Natural killer cell (primary cell): ENCODE measurements at regions of chr4 and their contacts with region 1.

Region 1: GRCh38 chr4:48085821-48086607 is 48.0 kb downstream of the TXK start:
- DNase-seq: no peak
- ATAC-seq: peak; percentile 35 to 78 (median 73)
- H3K4me3 ChIP-seq: no peak overlapping the region
- H3K4me3 Mint-ChIP-seq: no peak overlapping the region
- H3K27ac ChIP-seq: no peak overlapping the region
- H3K27ac Mint-ChIP-seq: peak overlapping the region; percentile 52 to 73
- H3K4me1 ChIP-seq: peaks cover 13% of the 10 kb centered on the region
- H3K4me1 Mint-ChIP-seq: peaks cover 42 to 48% of the 10 kb centered on the region in 2 donors
- H3K27me3 ChIP-seq: no peaks in the 10 kb centered on the region
- H3K27me3 Mint-ChIP-seq: no peaks in the 10 kb centered on the region
- CTCF ChIP-seq: no peak

Region 2: GRCh38 chr4:47926639-47927258 is 159.3 kb before region 1 on chr4:
- intact Hi-C with region 1: loop called (anchors 5 kb)
- DNase-seq: peak; percentile 28 to 71
- ATAC-seq: peak; percentile 88 to 99 (median 98)
- H3K4me3 ChIP-seq: no peak overlapping the region
- H3K4me3 Mint-ChIP-seq: no peak overlapping the region
- H3K27ac ChIP-seq: no peak overlapping the region
- H3K27ac Mint-ChIP-seq: no peak overlapping the region
- H3K4me1 ChIP-seq: peaks cover 6% of the 10 kb centered on the region
- H3K4me1 Mint-ChIP-seq: peaks cover 6% of the 10 kb centered on the region in 2 donors
- H3K27me3 ChIP-seq: peaks cover 2% of the 10 kb centered on the region
- H3K27me3 Mint-ChIP-seq: peaks cover 32 to 53% of the 10 kb centered on the region in 2 donors
- CTCF ChIP-seq: peak; percentile 79

Region 3: GRCh38 chr4:48008021-48008596 is 77.9 kb before region 1 on chr4:
- intact Hi-C with region 1: loop called (anchors 1 kb)
- DNase-seq: no peak
- ATAC-seq: no peak
- H3K4me3 ChIP-seq: no peak overlapping the region
- H3K4me3 Mint-ChIP-seq: no peak overlapping the region
- H3K27ac ChIP-seq: no peak overlapping the region
- H3K27ac Mint-ChIP-seq: no peak overlapping the region
- H3K4me1 ChIP-seq: no peaks in the 10 kb centered on the region
- H3K4me1 Mint-ChIP-seq: no peaks in the 10 kb centered on the region
- H3K27me3 ChIP-seq: no peaks in the 10 kb centered on the region
- H3K27me3 Mint-ChIP-seq: peaks cover 6 to 10% of the 10 kb centered on the region in 2 donors
- CTCF ChIP-seq: no peak

Region 4: DNA sequence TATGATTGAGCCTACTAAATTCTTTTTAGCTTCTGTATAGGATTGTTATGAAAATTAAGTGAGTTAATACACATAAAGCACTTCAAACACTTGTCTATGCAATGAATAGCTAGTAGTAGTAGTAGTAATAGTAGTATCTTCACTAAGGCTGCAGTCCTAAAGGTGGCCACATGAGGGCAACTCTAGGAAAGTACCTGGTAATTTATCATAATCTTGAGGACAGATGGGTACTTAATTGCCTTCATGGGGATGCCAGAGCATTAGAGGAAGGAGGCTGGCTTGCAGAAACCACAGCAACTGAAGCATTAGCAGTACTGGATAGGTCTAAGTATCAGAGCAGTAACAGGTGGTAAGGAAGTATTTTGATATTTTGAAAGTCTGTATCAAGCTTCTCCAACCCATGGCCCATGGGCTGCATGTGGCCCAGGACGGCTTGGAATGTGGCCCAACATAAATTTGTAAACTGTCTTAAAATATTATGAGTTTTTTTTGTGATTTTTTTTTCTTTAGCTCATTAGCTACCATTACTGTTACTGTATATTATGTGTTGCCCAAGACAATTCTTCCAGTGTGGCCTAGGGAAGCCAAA is 52.1 kb before region 1 on chr4:
- intact Hi-C with region 1: loop called (anchors 1 kb)
- DNase-seq: peak; percentile 55 to 78
- ATAC-seq: peak; percentile 84 to 99 (median 98)
- H3K4me3 ChIP-seq: no peak overlapping the region
- H3K4me3 Mint-ChIP-seq: no peak overlapping the region
- H3K27ac ChIP-seq: no peak overlapping the region
- H3K27ac Mint-ChIP-seq: peak overlapping the region in 1 of 2 donors; percentile 19
- H3K4me1 ChIP-seq: peaks cover 8% of the 10 kb centered on the region
- H3K4me1 Mint-ChIP-seq: peaks cover 6 to 7% of the 10 kb centered on the region in 2 donors
- H3K27me3 ChIP-seq: no peaks in the 10 kb centered on the region
- H3K27me3 Mint-ChIP-seq: peaks cover 0 to 17% of the 10 kb centered on the region in 2 donors
- CTCF ChIP-seq: peak; percentile 83

Region 5: GRCh38 chr4:48100256-48100655 is 14.2 kb after region 1 on chr4:
- intact Hi-C with region 1: no loop called
- DNase-seq: no peak
- ATAC-seq: no peak
- H3K4me3 ChIP-seq: no peak overlapping the region
- H3K4me3 Mint-ChIP-seq: peak overlapping the region; percentile 21
- H3K27ac ChIP-seq: no peak overlapping the region
- H3K27ac Mint-ChIP-seq: peak overlapping the region; percentile 88 to 90
- H3K4me1 ChIP-seq: peaks cover 12% of the 10 kb centered on the region
- H3K4me1 Mint-ChIP-seq: peaks cover 35 to 40% of the 10 kb centered on the region in 2 donors
- H3K27me3 ChIP-seq: no peaks in the 10 kb centered on the region
- H3K27me3 Mint-ChIP-seq: no peaks in the 10 kb centered on the region
- CTCF ChIP-seq: no peak

Region 6: DNA sequence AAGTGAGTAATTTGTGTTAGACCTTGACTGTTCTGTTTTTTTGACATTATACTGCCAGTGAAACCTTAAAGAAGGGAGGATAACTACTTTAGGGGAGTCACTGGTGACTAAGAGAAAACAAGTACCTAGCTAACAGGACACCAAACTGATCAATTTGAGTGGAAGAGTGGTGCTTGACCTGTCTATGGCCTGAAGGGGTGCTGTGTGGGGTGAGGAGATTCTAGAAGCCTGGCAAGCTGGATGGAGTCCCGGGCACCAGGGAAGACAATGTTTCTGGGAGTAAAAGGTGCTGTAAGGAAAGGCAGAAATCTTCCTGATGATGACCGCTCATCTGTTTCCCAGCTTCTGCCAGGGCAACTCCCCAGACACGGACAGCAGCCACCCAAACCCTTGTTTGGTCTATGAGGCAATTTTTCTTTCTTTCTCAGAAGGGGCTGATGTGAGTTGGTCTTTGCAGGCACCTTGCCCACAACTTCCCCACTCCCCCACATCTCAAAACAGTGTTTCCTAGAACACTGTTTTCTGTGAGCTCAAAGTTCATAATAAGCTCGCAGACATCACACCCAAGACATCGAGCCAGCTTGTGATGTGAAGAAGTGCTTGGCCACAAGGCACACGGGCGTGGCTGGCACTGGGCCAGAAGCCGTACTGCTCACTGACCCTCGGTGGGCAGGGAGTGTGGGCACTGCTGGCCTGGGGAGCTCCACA is 43.4 kb after region 1 on chr4:
- intact Hi-C with region 1: no loop called
- DNase-seq: peak; percentile 49 to 51
- ATAC-seq: peak; percentile 54 to 74 (median 71)
- H3K4me3 ChIP-seq: peak overlapping the region; percentile 7
- H3K4me3 Mint-ChIP-seq: peak overlapping the region; percentile 97
- H3K27ac ChIP-seq: peak overlapping the region; percentile 97
- H3K27ac Mint-ChIP-seq: peak overlapping the region in 1 of 2 donors; percentile 91
- H3K4me1 ChIP-seq: peaks cover 64% of the 10 kb centered on the region
- H3K4me1 Mint-ChIP-seq: peaks cover 83 to 92% of the 10 kb centered on the region in 2 donors
- H3K27me3 ChIP-seq: no peaks in the 10 kb centered on the region
- H3K27me3 Mint-ChIP-seq: no peaks in the 10 kb centered on the region
- CTCF ChIP-seq: peak; percentile 25